Activated CD4-positive, alpha-beta T cell treated with anti-CD3 and anti-CD28 coated beads, Interleukin-2, amount 10 ng/mL, durations not matched to agents 24 days and 14 days (primary cell): ENCODE measurements at regions of chr1 and their contacts with region 1.

Region 1: DNA sequence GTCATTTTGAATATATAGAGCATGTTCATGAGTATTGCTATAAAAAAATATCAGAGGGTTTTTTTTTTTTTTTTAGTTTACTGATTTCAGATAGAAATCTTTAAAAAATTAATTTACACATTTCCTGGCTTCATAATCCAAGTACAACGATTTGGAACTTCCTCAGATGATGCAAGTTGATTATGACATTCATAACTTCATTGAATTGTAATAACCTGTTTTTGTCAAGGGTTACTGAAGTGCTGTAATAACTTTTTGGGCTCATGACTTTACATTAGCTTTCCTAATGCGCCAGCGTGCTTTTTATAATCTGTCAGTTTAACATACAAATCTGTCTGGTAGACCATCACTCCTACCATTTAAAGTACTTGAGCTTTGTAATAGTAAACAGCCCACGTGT is 81.3 kb downstream of the SASS6 start:
- DNase-seq: no peak
- H3K4me3 Mint-ChIP-seq: no peak overlapping the region
- H3K27ac Mint-ChIP-seq: no peak overlapping the region
- H3K4me1 Mint-ChIP-seq: peaks cover 38% of the 10 kb centered on the region
- H3K27me3 Mint-ChIP-seq: no peaks in the 10 kb centered on the region

Region 2: DNA sequence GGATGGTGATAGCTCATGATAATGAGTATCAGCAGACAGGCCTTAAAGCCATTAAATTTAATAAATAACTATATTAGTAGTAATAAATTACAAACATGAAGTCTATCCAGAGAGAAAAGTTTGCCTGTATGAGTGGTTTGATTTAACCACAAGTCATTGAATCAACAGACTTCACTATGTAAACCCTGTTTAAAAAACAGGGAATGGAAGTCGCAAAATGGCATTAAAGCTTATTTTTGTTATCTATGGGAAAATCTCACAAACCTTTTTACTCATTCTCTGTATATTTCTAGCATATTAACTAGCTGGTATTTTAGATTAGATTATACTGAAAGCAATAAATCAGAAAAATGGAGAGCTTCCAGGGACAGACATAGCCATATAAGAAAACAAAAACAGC is 36.0 kb after region 1 on chr1:
- intact Hi-C with region 1: loop called (anchors 5 kb)
- DNase-seq: no peak
- H3K4me3 Mint-ChIP-seq: no peak overlapping the region
- H3K27ac Mint-ChIP-seq: no peak overlapping the region
- H3K4me1 Mint-ChIP-seq: peaks cover 3% of the 10 kb centered on the region
- H3K27me3 Mint-ChIP-seq: no peaks in the 10 kb centered on the region

Region 3: DNA sequence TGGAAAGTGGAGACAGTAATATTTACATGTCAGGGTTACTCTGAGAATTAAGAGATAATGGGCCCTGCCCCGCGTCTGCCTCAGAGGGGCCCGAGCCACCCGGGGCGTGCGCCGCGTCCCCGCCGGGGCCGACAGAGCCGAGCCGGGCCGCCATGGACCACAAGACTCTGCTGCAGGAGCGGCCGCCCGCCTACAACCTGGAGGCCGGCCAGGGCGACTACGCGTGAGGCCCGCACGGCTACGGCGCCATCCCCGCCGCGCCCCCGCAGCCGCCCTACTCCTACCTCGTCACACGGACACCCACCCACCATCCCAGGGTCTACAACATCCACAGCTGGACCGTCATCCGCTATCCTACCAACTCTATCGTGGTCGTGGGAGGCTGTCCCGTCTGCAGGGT is 161.7 kb after region 1 on chr1:
- intact Hi-C with region 1: no loop called
- DNase-seq: no peak
- H3K4me3 Mint-ChIP-seq: no peak overlapping the region
- H3K27ac Mint-ChIP-seq: no peak overlapping the region
- H3K4me1 Mint-ChIP-seq: no peaks in the 10 kb centered on the region
- H3K27me3 Mint-ChIP-seq: no peaks in the 10 kb centered on the region